ENCODE measurements at regions of chr7 and their contacts with region 1.

Region 1: GRCh38 chr7:30412810-30413504 is 65.6 kb downstream of the NOD1 start:
- DNase-seq: no peak
- ATAC-seq: peak; percentile 86

Region 2: GRCh38 chr7:29508608-29509007 is 904.3 kb before region 1 on chr7:
- intact Hi-C with region 1: no loop called
- DNase-seq: no peak
- ATAC-seq: no peak

Region 3: GRCh38 chr7:30164567-30164966 is 248.4 kb before region 1 on chr7:
- intact Hi-C with region 1: loop called (anchors 2 kb)
- DNase-seq: no peak
- ATAC-seq: peak; percentile 64

Region 4: GRCh38 chr7:30240106-30240800 is 172.7 kb before region 1 on chr7:
- intact Hi-C with region 1: no loop called
- DNase-seq: no peak
- ATAC-seq: peak; percentile 74

Region 5: DNA sequence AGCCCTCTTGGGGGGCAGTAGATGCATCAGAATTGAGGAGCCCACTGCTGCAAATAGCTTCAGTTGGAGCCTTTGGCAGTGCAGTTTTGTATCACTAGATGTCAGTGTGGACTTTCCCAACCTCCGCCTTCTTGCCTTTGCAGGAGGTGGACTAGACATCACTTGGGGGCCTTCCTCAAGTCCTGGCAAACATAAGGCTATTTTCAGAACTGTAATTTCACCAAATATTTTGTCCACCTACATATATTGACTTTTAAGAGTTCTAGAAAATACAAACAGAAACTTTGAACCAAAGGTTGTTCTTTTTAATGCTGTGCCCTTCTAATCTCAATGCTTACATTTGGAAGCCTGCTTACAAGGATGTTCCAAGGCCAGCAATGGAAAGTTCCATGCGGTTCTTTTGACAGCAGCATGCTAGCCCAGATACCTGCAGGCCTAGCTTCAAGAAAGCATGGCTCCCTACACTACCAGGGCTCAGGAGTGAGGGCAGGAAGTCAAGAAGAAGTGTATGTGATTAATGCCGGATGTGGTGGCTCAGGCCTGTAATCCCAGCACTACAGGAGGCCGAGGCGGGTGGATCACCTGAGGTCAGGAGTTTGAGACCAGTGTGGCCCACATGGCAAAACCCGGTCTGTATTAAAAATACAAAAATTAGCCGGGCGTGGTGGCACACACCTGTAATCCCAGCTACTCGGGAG is 136.6 kb before region 1 on chr7:
- intact Hi-C with region 1: loop called (anchors 5 kb)
- DNase-seq: no peak
- ATAC-seq: peak; percentile 50

Region 6: GRCh38 chr7:30308389-30308788 is 104.6 kb before region 1 on chr7:
- intact Hi-C with region 1: no loop called
- DNase-seq: no peak
- ATAC-seq: no peak

Measured in Right ventricle myocardium inferior (tissue), 1 donor.